ENCODE measurements at regions of chr12 and their contacts with region 1.

Region 1: GRCh38 chr12:6533923-6534694 is at the start of gene GAPDH:
- DNase-seq: peak; percentile 90 to 99
- ATAC-seq: peak; percentile 54 to 73
- H3K4me3 ChIP-seq: peak within 1 kb of the TSS; percentile 97
- H3K27ac ChIP-seq: peak within 1 kb of the TSS; percentile 97 to 100
- H3K4me1 ChIP-seq: peaks cover 51% of the 10 kb centered on the region
- CTCF ChIP-seq: no peak
- EP300 ChIP-seq: no peak
- POLR2A ChIP-seq: peak; percentile 99
- RAD21 ChIP-seq: no peak; a peak in 1 of 5 replicates
- polyA plus RNA-seq, gene GAPDH: 10,036 and 10,800 TPM in 2 replicates

Region 2: DNA sequence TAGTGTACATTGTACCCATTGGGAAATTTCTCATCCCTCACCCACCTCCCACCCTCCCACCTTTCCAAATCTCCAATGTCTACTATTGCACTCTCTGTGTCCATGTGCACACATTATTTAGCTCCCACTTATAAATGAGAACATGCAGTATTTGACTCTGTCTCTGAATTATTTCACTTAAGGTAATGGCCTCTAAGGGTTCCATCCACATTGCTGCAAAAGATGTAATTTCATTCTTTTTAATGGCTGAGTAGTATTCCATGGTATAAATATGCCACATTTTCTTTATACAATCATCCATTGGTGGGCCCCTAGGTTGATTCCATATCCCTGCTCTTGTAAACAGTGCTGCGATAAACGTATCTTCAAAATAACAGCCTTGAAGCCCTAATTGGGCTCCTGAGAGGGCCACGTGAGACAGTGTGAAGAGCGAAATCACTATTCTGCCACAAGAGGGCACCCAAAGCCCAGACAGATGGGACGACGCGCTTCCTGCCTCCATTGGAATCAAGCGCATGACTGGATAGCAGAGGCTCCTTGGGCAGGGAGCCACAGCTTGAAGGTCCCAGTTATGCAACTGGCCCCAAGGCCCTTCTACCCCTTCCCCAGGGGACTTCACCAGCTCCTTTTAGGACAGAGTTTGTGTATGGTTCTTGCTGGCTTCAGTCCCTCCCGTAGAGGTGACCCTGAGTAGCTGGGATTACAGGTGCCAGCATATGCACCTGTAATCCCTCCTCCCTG is 110.7 kb before region 1 on chr12:
- CTCF ChIA-PET with region 1: interaction called, 76 read pairs
- POLR2A ChIA-PET with region 1: interaction called, 4 read pairs
- DNase-seq: peak; percentile 87 to 93
- ATAC-seq: peak; percentile 91 to 95
- H3K4me3 ChIP-seq: no peak overlapping the region
- H3K27ac ChIP-seq: peak overlapping the region; percentile 42 to 76; a peak in 4 of 6 replicates
- H3K4me1 ChIP-seq: peaks cover 26% of the 10 kb centered on the region
- CTCF ChIP-seq: peak; percentile 95
- EP300 ChIP-seq: no peak
- POLR2A ChIP-seq: no peak
- RAD21 ChIP-seq: peak; percentile 98

Region 3: GRCh38 chr12:6493497-6494257 is 40.4 kb before region 1 on chr12 and contains the start of gene NCAPD2:
- CTCF ChIA-PET with region 1: interaction called, 18 read pairs
- POLR2A ChIA-PET with region 1: interaction called, 39 read pairs
- DNase-seq: peak; percentile 90 to 98
- ATAC-seq: peak; percentile 94 to 95
- H3K4me3 ChIP-seq: peak within 1 kb of the TSS; percentile 80
- H3K27ac ChIP-seq: peak within 1 kb of the TSS; percentile 90 to 93
- H3K4me1 ChIP-seq: peaks cover 25% of the 10 kb centered on the region
- CTCF ChIP-seq: no peak
- EP300 ChIP-seq: no peak
- POLR2A ChIP-seq: peak; percentile 69
- RAD21 ChIP-seq: no peak
- polyA plus RNA-seq, gene NCAPD2: 130 and 145 TPM in 2 replicates

Region 4: GRCh38 chr12:6507102-6507998 is 26.8 kb before region 1 on chr12:
- CTCF ChIA-PET with region 1: interaction called, 19 read pairs
- POLR2A ChIA-PET with region 1: interaction called, 9 read pairs
- DNase-seq: no peak
- ATAC-seq: no peak
- H3K4me3 ChIP-seq: no peak overlapping the region
- H3K27ac ChIP-seq: peak overlapping the region; percentile 25 to 55; a peak in 4 of 6 replicates
- H3K4me1 ChIP-seq: no peaks in the 10 kb centered on the region
- CTCF ChIP-seq: no peak
- EP300 ChIP-seq: no peak
- POLR2A ChIP-seq: no peak
- RAD21 ChIP-seq: no peak

Region 5: GRCh38 chr12:6554168-6555017 is 20.3 kb after region 1 on chr12:
- CTCF ChIA-PET with region 1: interaction called, 491 read pairs
- POLR2A ChIA-PET with region 1: interaction called, 34 read pairs
- DNase-seq: peak; percentile 82 to 83
- ATAC-seq: peak; percentile 81 to 86
- H3K4me3 ChIP-seq: no peak overlapping the region
- H3K27ac ChIP-seq: no peak overlapping the region
- H3K4me1 ChIP-seq: peaks cover 19% of the 10 kb centered on the region
- CTCF ChIP-seq: peak; percentile 50
- EP300 ChIP-seq: no peak
- POLR2A ChIP-seq: no peak
- RAD21 ChIP-seq: peak; percentile 28 to 47; a peak in 3 of 5 replicates

Region 6: GRCh38 chr12:6563448-6564050 is 29.4 kb after region 1 on chr12:
- CTCF ChIA-PET with region 1: interaction called, 491 read pairs
- POLR2A ChIA-PET with region 1: interaction called, 13 read pairs
- DNase-seq: peak; percentile 65 to 69
- ATAC-seq: peak; percentile 55 to 64; a peak in 4 of 6 replicates
- H3K4me3 ChIP-seq: no peak overlapping the region
- H3K27ac ChIP-seq: no peak overlapping the region
- H3K4me1 ChIP-seq: peaks cover 6% of the 10 kb centered on the region; the same call in 2 of the 3 replicates
- CTCF ChIP-seq: peak; percentile 80
- EP300 ChIP-seq: no peak
- POLR2A ChIP-seq: no peak
- RAD21 ChIP-seq: peak; percentile 20 to 33; a peak in 1 of 5 replicates